Activated naive CD4-positive, alpha-beta T cell treated with anti-CD3 and anti-CD28 coated beads, Interleukin-2, amount 10 ng/mL, durations not matched to agents 7 days and 5 days (primary cell): ENCODE measurements at regions of chr21 and their contacts with region 1.

Region 1: GRCh38 chr21:42593007-42593806 is 60.2 kb upstream of the PDE9A start:
- DNase-seq: peak; percentile 80
- H3K4me3 Mint-ChIP-seq: no peak overlapping the region
- H3K27ac Mint-ChIP-seq: no peak overlapping the region
- H3K4me1 Mint-ChIP-seq: peaks cover 24% of the 10 kb centered on the region
- H3K27me3 Mint-ChIP-seq: peaks cover 26% of the 10 kb centered on the region

Region 2: GRCh38 chr21:42818328-42818749 is 225.1 kb after region 1 on chr21:
- CTCF ChIA-PET with region 1: interaction called, 33 read pairs
- DNase-seq: peak; percentile 72
- H3K4me3 Mint-ChIP-seq: no peak overlapping the region
- H3K27ac Mint-ChIP-seq: no peak overlapping the region
- H3K4me1 Mint-ChIP-seq: no peaks in the 10 kb centered on the region
- H3K27me3 Mint-ChIP-seq: peaks cover 27% of the 10 kb centered on the region

Region 3: GRCh38 chr21:42833439-42833815 is 240.2 kb after region 1 on chr21:
- CTCF ChIA-PET with region 1: interaction called, 15 read pairs
- DNase-seq: peak; percentile 77
- H3K4me3 Mint-ChIP-seq: peak overlapping the region; percentile 10
- H3K27ac Mint-ChIP-seq: peak overlapping the region; percentile 68
- H3K4me1 Mint-ChIP-seq: peaks cover 31% of the 10 kb centered on the region
- H3K27me3 Mint-ChIP-seq: peaks cover 35% of the 10 kb centered on the region

Region 4: GRCh38 chr21:42880352-42880751 is 287.1 kb after region 1 on chr21:
- CTCF ChIA-PET with region 1: no interaction called
- DNase-seq: no peak
- H3K4me3 Mint-ChIP-seq: peak overlapping the region; percentile 96
- H3K27ac Mint-ChIP-seq: peak overlapping the region; percentile 93
- H3K4me1 Mint-ChIP-seq: peaks cover 36% of the 10 kb centered on the region
- H3K27me3 Mint-ChIP-seq: peaks cover 5% of the 10 kb centered on the region